ENCODE measurements at regions of chr1 and their contacts with region 1.

Region 1: DNA sequence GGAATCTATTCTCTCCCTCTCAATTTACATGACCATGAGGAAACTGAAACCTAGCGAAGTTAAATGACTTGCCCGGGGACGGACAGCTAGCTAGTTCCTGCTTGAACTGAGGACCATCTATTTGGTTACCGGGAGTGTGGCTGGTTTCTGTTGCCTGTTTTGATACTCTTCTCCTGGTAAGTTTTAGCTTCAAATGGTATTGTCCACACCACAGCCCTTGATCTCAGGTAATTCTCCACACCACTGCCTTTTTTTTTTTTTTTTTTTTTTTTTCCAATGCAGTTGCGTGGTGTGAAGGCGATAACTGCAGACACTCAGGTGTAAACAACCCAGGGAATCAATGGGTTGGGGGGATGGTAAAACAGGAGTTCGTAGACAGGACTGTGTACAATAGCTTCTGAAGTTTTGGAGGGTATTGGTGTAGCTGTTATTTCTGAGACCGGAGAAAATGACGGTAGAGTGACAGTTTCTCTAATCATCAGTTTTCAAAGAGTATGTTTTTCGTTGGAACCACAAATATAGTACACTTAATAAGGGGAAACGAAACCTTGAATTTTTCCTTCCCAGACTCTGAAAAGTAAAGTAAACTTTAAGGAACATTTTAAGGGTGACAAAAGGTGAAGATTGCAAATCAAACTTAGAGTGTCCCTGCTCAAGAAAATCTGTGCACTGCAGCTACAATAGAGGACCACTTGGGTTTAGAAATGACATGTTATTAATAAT is 125.3 kb upstream of the CACYBP start:
- DNase-seq: peak; percentile 47
- ATAC-seq: peak; percentile 48
- H3K4me3 ChIP-seq: peak overlapping the region; percentile 30 to 68 (median 63)
- H3K4me3 Mint-ChIP-seq: peak overlapping the region; percentile 91
- H3K27ac ChIP-seq: peak overlapping the region in 1 of 2 donors; percentile 72
- H3K27ac Mint-ChIP-seq: peak overlapping the region; percentile 86
- H3K4me1 ChIP-seq: peaks cover 20 to 31% of the 10 kb centered on the region in 2 donors
- H3K4me1 Mint-ChIP-seq: peaks cover 51% of the 10 kb centered on the region
- H3K27me3 ChIP-seq: no peaks in the 10 kb centered on the region
- H3K27me3 Mint-ChIP-seq: no peaks in the 10 kb centered on the region
- CTCF ChIP-seq: no peak

Region 2: DNA sequence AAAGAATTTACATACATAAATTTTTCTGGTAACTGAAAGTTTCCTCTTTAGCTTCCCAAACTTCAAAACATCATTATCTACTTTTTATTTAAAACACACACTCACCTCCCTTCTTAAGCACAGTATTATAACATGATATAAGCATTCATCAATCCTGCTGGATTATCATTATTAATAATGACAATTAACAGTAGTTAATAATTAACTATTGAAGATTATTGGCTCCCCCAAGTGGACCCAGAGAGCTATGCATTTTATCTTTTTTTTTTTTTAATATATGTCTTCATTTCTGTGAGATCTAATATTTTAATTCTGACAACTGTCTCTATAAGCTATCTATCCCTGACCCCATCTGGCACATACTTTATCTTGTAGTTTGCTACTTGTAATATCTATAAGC is 126.9 kb before region 1 on chr1:
- CTCF ChIA-PET with region 1: no interaction called
- POLR2A ChIA-PET with region 1: no interaction called
- intact Hi-C with region 1: no loop called
- DNase-seq: no peak
- ATAC-seq: no peak
- H3K4me3 ChIP-seq: no peak overlapping the region
- H3K4me3 Mint-ChIP-seq: no peak overlapping the region
- H3K27ac ChIP-seq: no peak overlapping the region
- H3K27ac Mint-ChIP-seq: no peak overlapping the region
- H3K4me1 ChIP-seq: no peaks in the 10 kb centered on the region
- H3K4me1 Mint-ChIP-seq: peaks cover 7% of the 10 kb centered on the region
- H3K27me3 ChIP-seq: no peaks in the 10 kb centered on the region
- H3K27me3 Mint-ChIP-seq: no peaks in the 10 kb centered on the region
- CTCF ChIP-seq: peak; percentile 27

Region 3: DNA sequence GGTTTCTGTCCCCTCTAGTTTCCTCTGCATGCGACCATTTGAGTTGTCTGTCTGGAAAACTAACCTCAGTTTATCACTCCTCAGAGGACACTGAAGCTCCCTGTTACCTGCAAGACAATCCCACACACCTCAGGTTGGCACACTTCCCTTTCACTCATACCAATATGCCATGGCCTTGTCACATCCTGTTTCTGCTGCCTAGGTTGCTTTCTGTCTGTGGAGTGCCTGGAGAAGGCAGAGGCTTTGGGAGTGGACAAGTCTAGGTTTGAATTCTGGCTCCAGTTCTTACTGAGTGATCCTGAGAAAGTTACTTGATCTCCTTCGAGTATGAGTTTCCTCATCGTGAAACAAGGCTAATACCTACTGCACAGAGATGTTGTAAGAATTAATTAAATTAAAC is 46.2 kb before region 1 on chr1:
- CTCF ChIA-PET with region 1: no interaction called
- POLR2A ChIA-PET with region 1: no interaction called
- intact Hi-C with region 1: loop called (anchors 5 kb)
- DNase-seq: no peak
- ATAC-seq: no peak
- H3K4me3 ChIP-seq: no peak overlapping the region
- H3K4me3 Mint-ChIP-seq: no peak overlapping the region
- H3K27ac ChIP-seq: no peak overlapping the region
- H3K27ac Mint-ChIP-seq: no peak overlapping the region
- H3K4me1 ChIP-seq: no peaks in the 10 kb centered on the region
- H3K4me1 Mint-ChIP-seq: no peaks in the 10 kb centered on the region
- H3K27me3 ChIP-seq: no peaks in the 10 kb centered on the region
- H3K27me3 Mint-ChIP-seq: no peaks in the 10 kb centered on the region
- CTCF ChIP-seq: no peak

Region 4: DNA sequence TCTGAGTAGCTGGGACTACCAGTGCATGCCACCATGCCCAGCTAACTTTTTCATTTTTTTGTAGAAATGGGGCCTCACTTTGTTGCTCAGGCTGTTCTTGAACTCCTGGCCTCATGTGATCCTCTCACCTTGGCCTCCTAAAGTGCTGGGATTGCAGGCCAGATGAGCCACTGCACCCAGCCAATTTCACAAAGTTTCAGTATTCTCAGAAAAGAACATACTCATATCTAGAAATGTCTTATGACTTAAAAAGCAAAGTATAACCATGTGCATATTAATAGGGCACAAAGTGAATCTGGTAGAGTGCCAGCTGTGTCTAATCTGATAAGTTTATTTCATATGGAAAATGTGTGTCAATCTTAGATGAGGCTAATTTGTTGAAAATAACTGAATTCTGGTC is 37.8 kb after region 1 on chr1:
- CTCF ChIA-PET with region 1: no interaction called
- POLR2A ChIA-PET with region 1: interaction called, 3 read pairs
- intact Hi-C with region 1: loop called (anchors 5 kb)
- DNase-seq: no peak
- ATAC-seq: no peak
- H3K4me3 ChIP-seq: no peak overlapping the region
- H3K4me3 Mint-ChIP-seq: no peak overlapping the region
- H3K27ac ChIP-seq: no peak overlapping the region
- H3K27ac Mint-ChIP-seq: no peak overlapping the region
- H3K4me1 ChIP-seq: peaks cover 7 to 8% of the 10 kb centered on the region in 2 donors
- H3K4me1 Mint-ChIP-seq: peaks cover 18% of the 10 kb centered on the region
- H3K27me3 ChIP-seq: no peaks in the 10 kb centered on the region
- H3K27me3 Mint-ChIP-seq: no peaks in the 10 kb centered on the region
- CTCF ChIP-seq: no peak

Region 5: DNA sequence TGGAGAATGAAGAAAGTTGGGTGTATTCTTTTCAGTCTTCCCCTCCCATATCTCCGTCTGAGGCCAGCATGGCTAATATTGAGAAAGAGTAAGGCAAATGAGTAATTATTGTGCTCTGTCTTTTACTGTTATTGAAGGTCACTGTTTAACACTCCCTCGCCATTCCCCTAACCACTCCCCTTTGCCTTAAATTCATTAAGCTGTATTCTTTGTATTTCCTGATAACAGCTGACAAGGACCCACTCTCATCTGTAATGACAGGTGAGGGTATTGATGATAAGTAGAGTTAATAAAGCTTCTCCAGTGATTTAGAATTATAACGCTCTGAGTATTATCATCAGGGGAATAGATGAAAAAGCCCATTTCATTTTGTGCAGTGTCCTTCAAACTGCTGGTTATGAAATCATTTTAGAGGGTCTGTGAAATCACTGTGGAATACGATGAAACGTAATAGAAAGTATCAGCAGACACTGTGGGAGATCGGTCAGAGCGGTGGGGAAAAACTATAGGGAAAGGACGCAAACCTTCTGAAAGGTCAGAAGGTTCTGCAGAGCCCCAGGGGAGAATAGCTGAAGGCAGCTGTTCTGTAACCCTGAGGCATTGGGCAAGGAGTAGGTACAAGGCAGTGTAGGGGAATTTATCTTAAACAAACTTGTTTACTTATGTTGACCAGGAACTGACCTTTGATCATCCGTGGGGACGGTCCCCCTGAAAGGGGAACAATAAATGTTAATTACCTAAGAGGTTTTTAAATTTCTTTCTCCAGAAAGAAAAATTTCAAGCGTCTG is 79.0 kb after region 1 on chr1:
- CTCF ChIA-PET with region 1: no interaction called
- POLR2A ChIA-PET with region 1: interaction called, 6 read pairs
- intact Hi-C with region 1: loop called (anchors 5 kb)
- DNase-seq: no peak
- ATAC-seq: peak; percentile 72
- H3K4me3 ChIP-seq: no peak overlapping the region
- H3K4me3 Mint-ChIP-seq: peak overlapping the region; percentile 83
- H3K27ac ChIP-seq: peak overlapping the region; percentile 45 to 76
- H3K27ac Mint-ChIP-seq: peak overlapping the region; percentile 85
- H3K4me1 ChIP-seq: peaks cover 27 to 37% of the 10 kb centered on the region in 2 donors
- H3K4me1 Mint-ChIP-seq: peaks cover 51% of the 10 kb centered on the region
- H3K27me3 ChIP-seq: no peaks in the 10 kb centered on the region
- H3K27me3 Mint-ChIP-seq: no peaks in the 10 kb centered on the region
- CTCF ChIP-seq: no peak

Region 6: DNA sequence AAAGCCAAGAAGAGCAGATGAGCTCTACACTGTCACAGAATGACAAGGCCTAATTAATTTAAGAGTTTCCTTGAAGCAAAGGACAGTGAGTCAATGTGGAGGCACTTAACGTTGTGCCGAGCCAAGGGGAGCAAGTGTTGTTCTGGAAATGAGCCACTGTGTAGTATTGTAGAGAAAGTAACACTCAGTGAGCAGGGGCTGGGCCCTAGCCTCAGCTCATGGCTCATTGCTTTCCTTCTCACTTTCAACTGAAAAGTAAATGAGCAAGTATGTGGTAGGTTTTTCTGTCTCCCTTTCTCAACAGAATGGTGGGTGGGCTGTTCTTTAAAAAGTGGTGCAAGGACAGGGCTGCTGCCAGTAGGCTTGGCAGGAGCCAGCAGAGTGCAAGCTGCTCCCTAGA is 329.8 kb after region 1 on chr1:
- CTCF ChIA-PET with region 1: no interaction called
- POLR2A ChIA-PET with region 1: no interaction called
- intact Hi-C with region 1: no loop called
- DNase-seq: no peak
- ATAC-seq: no peak
- H3K4me3 ChIP-seq: no peak overlapping the region
- H3K4me3 Mint-ChIP-seq: peak overlapping the region; percentile 42
- H3K27ac ChIP-seq: peak overlapping the region; percentile 26 to 51
- H3K27ac Mint-ChIP-seq: peak overlapping the region; percentile 83
- H3K4me1 ChIP-seq: peaks cover 56 to 74% of the 10 kb centered on the region in 2 donors
- H3K4me1 Mint-ChIP-seq: peaks cover 72% of the 10 kb centered on the region
- H3K27me3 ChIP-seq: no peaks in the 10 kb centered on the region
- H3K27me3 Mint-ChIP-seq: no peaks in the 10 kb centered on the region
- CTCF ChIP-seq: no peak